Ascending aorta (tissue), 2 donors: ENCODE measurements at regions of chr15 and their contacts with region 1.

Region 1: GRCh38 chr15:51192521-51193280 is 98.0 kb upstream of the TNFAIP8L3 start:
- DNase-seq: peak; percentile 54 to 96
- H3K4me3 ChIP-seq: peak overlapping the region in 1 of 2 donors; percentile 26
- H3K27ac ChIP-seq: peak overlapping the region; percentile 78 to 84
- H3K4me1 ChIP-seq: peaks cover 7 to 42% of the 10 kb centered on the region in 2 donors
- H3K27me3 ChIP-seq: no peaks in the 10 kb centered on the region
- CTCF ChIP-seq: peak; percentile 86 to 94 (median 89)

Region 2: GRCh38 chr15:51077221-51078153 is 115.2 kb before region 1 on chr15:
- intact Hi-C with region 1: loop called (anchors 10 kb)
- DNase-seq: peak; percentile 50 to 88
- H3K4me3 ChIP-seq: peak overlapping the region in 1 of 2 donors; percentile 54
- H3K27ac ChIP-seq: peak overlapping the region; percentile 81 to 89
- H3K4me1 ChIP-seq: peaks cover 6 to 22% of the 10 kb centered on the region in 2 donors
- H3K27me3 ChIP-seq: no peaks in the 10 kb centered on the region
- CTCF ChIP-seq: no peak

Region 3: GRCh38 chr15:51132384-51133139 is 60.1 kb before region 1 on chr15:
- intact Hi-C with region 1: loop called (anchors 5 kb)
- DNase-seq: peak in 1 of 2 donors; percentile 81
- H3K4me3 ChIP-seq: no peak overlapping the region
- H3K27ac ChIP-seq: peak overlapping the region; percentile 58 to 71
- H3K4me1 ChIP-seq: peaks cover 4 to 14% of the 10 kb centered on the region in 2 donors
- H3K27me3 ChIP-seq: no peaks in the 10 kb centered on the region
- CTCF ChIP-seq: peak; percentile 83 to 97 (median 93)

Region 4: GRCh38 chr15:51227940-51228783 is 35.5 kb after region 1 on chr15:
- intact Hi-C with region 1: loop called (anchors 2 kb)
- DNase-seq: peak; percentile 19 to 81
- H3K4me3 ChIP-seq: no peak overlapping the region
- H3K27ac ChIP-seq: peak overlapping the region; percentile 56
- H3K4me1 ChIP-seq: peaks cover 0 to 17% of the 10 kb centered on the region in 2 donors
- H3K27me3 ChIP-seq: no peaks in the 10 kb centered on the region
- CTCF ChIP-seq: no peak